SK-N-SH (cell line): ENCODE measurements at regions of chr2 and their contacts with region 1.

Region 1: DNA sequence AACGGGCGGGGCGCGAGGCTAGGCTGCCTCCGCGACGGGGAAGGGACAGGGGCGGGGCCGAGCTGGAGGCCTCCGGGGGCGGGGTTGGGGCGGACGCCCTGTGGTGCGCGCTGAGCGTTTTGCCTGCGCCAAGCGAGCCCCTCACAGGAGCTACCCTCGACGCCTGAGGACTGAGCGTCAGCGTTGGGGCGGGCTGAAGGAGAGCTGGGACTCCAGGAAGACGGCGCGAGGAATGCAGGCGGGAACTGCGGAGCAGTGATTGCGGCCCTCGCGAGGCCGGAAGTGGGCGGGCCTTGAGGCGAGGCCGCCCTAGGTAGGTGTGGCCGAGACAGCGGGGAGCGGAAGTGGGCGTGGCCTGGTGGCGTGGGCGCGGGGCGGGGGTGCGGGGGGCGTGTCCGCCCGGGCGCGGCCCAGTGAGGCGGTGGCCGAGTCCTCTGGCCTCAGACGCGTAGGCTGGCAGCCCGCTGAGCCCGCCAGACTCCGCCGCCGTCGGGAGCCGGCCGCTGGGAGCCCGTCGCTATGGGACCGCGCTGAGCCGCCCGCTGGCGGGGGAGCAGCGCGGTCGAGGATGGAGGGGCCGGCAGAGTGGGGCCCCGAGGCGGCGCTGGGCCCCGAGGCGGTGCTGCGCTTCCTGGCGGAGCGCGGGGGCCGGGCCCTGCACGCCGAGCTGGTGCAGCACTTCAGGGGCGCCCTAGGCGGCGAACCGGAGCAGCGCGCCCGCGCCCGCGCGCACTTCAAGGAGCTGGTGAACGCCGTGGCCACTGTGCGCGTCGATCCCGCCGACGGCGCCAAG is at the starts of genes SEPTIN10 and SOWAHC:
- DNase-seq: peak; percentile 98
- H3K4me3 ChIP-seq: peak within 1 kb of the TSS; percentile 81 to 84
- H3K27ac ChIP-seq: peak within 1 kb of the TSS; percentile 90 to 92
- H3K4me1 ChIP-seq: peaks cover 16 to 26% of the 10 kb centered on the region in 2 experiments; a peak in 3 of 4 replicates
- H3K27me3 ChIP-seq: no peaks in the 10 kb centered on the region
- CTCF ChIP-seq: no peak
- EP300 ChIP-seq: no peak; a peak in 1 of 4 replicates
- RAD21 ChIP-seq: no peak
- polyA plus RNA-seq, gene SEPTIN10: 39.1 and 46.5 TPM in 2 replicates
- polyA plus RNA-seq, gene SOWAHC: 2.4 and 2.9 TPM in 2 replicates

Region 2: DNA sequence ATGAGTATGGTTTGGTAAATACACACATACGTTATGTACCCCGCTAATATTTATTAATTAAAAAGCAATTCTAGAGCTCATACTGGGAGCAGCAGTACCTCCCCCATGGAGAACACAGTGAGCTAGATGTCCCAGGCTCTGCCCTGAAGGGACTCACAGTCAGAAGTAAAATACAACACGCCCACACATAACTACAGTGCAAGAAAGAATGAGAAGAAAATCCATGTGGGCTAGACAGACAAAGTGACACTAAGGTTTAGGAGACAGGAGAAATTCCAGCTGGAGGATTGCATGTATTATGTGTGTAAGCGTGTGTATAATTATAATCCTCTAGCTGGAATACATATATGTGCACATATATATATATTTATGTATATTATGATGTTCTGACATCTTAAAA is 15.7 kb after region 1 on chr2:
- CTCF ChIA-PET with region 1: interaction called, 7 read pairs
- POLR2A ChIA-PET with region 1: interaction called, 11 read pairs
- DNase-seq: no peak
- H3K4me3 ChIP-seq: no peak overlapping the region
- H3K27ac ChIP-seq: no peak overlapping the region
- H3K4me1 ChIP-seq: no peaks in the 10 kb centered on the region
- H3K27me3 ChIP-seq: no peaks in the 10 kb centered on the region
- CTCF ChIP-seq: no peak
- EP300 ChIP-seq: no peak
- RAD21 ChIP-seq: no peak

Region 3: DNA sequence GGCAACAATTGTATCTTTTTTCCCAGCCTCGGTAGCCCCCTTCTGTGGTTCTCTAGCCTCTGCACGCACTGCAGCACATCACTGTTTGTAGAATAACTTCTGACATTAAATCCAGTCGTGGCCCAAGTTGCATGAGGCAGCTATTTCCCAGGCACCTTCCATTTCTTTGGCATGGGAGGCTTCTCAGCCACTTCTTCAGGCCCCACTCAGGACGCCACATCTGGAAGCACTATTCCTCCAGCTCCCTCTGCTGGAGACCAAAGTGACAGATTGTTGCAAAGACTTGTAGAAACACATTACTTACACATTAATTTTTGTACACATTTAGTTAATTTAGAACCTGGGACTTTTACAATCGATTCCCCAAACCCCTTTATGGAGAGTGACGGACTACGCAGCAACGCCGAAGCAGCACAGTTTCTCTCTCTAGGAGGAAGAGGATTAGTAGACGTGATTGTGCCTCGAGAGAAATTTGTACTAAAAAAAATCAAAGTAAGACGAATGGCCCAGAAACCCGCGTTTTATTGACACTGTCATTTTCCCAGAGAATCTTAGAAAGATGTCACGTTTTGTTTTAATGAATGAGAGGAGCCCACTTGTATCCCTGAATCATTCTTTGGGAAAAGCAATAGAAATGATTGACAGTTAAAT is 122.2 kb after region 1 on chr2:
- CTCF ChIA-PET with region 1: interaction called, 12 read pairs
- POLR2A ChIA-PET with region 1: no interaction called
- DNase-seq: peak; percentile 60
- H3K4me3 ChIP-seq: no peak overlapping the region; a peak in 1 of 4 replicates
- H3K27ac ChIP-seq: no peak overlapping the region
- H3K4me1 ChIP-seq: no peaks in the 10 kb centered on the region
- H3K27me3 ChIP-seq: no peaks in the 10 kb centered on the region
- CTCF ChIP-seq: peak; percentile 83
- EP300 ChIP-seq: no peak
- RAD21 ChIP-seq: peak; percentile 86